HCT116 (cell line): ENCODE measurements at regions of chr9 and their contacts with region 1.

Region 1: DNA sequence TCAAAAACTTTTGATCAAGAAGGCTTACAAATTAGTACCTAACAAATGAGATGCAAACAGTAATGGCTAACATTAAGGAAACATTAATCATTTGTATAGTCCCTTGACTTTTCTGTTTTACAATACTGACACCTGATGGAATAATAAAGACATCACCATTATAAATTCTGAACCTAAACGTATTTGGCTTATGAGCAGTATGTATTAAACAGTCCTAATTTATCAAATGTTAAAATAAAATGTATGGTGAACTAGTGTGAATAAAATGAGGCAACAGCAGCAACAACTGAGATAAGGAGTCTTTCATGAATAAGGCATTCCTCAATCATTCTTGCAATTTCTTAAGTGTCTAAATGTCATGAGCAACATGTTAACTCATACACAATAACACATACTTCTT is 6.0 kb downstream of the PUM3 start:
- DNase-seq: no peak
- ATAC-seq: no peak
- H3K4me3 ChIP-seq: no peak overlapping the region
- H3K27ac ChIP-seq: no peak overlapping the region
- H3K4me1 ChIP-seq: peaks cover 6 to 11% of the 10 kb centered on the region in 2 experiments; a peak in 3 of 4 replicates
- H3K27me3 ChIP-seq: no peaks in the 10 kb centered on the region
- CTCF ChIP-seq: peak in 2 of 3 experiments; percentile 8 to 40; a peak in 2 of 6 replicates
- POLR2A ChIP-seq: no peak
- RAD21 ChIP-seq: peak; percentile 34; the same call in 1 of the 2 replicates

Region 2: GRCh38 chr9:2241836-2242741 is 595.8 kb before region 1 on chr9:
- CTCF ChIA-PET with region 1: no interaction called
- POLR2A ChIA-PET with region 1: no interaction called
- RAD21 ChIA-PET with region 1: no interaction called
- intact Hi-C with region 1: loop called (anchors 5 kb)
- DNase-seq: peak; percentile 83
- ATAC-seq: peak; percentile 92
- H3K4me3 ChIP-seq: peak overlapping the region; percentile 43 to 54
- H3K27ac ChIP-seq: peak overlapping the region; percentile 30
- H3K4me1 ChIP-seq: peaks cover 0 to 20% of the 10 kb centered on the region in 2 experiments; a peak in 2 of 4 replicates
- H3K27me3 ChIP-seq: no peaks in the 10 kb centered on the region
- CTCF ChIP-seq: no peak
- POLR2A ChIP-seq: peak; percentile 37
- RAD21 ChIP-seq: 0 out of 2 replicates have a peak, but pooled peaks have one; percentile 14

Region 3: DNA sequence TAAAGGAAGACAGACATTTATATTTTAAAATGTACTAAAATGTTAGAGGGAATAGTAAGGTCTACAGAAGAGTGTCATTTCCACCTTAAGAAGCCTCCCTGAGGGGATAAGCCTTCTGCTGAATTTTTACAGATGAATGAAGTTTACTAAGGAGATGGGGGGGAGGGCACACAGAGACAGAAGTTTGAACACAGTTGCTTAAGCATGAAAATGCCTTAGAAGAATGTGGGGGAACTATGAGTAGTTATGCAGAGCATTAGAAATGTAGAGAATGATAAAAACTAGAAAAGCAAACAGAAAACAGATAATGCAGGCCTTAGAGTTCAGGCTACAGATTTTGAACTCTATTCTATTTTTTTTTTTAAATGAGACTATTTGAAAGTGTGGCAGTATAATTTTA is 448.5 kb before region 1 on chr9:
- CTCF ChIA-PET with region 1: no interaction called
- POLR2A ChIA-PET with region 1: no interaction called
- RAD21 ChIA-PET with region 1: no interaction called
- intact Hi-C with region 1: no loop called
- DNase-seq: no peak
- ATAC-seq: no peak
- H3K4me3 ChIP-seq: no peak overlapping the region
- H3K27ac ChIP-seq: no peak overlapping the region
- H3K4me1 ChIP-seq: no peaks in the 10 kb centered on the region
- H3K27me3 ChIP-seq: 0 out of 2 replicates have a peak, but pooled peaks cover 6% of the 10 kb centered on the region
- CTCF ChIP-seq: no peak
- POLR2A ChIP-seq: no peak
- RAD21 ChIP-seq: no peak